Dorsolateral prefrontal cortex (tissue), 120 donors: ENCODE measurements at regions of chr2 and their contacts with region 1.

Region 1: GRCh38 chr2:16452117-16452516 is 213.5 kb downstream of the CYRIA start:
- DNase-seq: no peak
- H3K4me3 ChIP-seq: no peak overlapping the region
- H3K27ac ChIP-seq: no peak overlapping the region
- H3K27me3 ChIP-seq: peaks cover 0 to 3% (median 0%) of the 10 kb centered on the region in 45 donors
- CTCF ChIP-seq: no peak

Region 2: GRCh38 chr2:16346671-16347070 is 105.4 kb before region 1 on chr2:
- intact Hi-C with region 1: loop called in 1 of 2 experiments (anchors 5 kb)
- DNase-seq: no peak
- H3K4me3 ChIP-seq: no peak overlapping the region
- H3K27ac ChIP-seq: no peak overlapping the region
- H3K27me3 ChIP-seq: no peaks in the 10 kb centered on the region
- CTCF ChIP-seq: no peak

Region 3: DNA sequence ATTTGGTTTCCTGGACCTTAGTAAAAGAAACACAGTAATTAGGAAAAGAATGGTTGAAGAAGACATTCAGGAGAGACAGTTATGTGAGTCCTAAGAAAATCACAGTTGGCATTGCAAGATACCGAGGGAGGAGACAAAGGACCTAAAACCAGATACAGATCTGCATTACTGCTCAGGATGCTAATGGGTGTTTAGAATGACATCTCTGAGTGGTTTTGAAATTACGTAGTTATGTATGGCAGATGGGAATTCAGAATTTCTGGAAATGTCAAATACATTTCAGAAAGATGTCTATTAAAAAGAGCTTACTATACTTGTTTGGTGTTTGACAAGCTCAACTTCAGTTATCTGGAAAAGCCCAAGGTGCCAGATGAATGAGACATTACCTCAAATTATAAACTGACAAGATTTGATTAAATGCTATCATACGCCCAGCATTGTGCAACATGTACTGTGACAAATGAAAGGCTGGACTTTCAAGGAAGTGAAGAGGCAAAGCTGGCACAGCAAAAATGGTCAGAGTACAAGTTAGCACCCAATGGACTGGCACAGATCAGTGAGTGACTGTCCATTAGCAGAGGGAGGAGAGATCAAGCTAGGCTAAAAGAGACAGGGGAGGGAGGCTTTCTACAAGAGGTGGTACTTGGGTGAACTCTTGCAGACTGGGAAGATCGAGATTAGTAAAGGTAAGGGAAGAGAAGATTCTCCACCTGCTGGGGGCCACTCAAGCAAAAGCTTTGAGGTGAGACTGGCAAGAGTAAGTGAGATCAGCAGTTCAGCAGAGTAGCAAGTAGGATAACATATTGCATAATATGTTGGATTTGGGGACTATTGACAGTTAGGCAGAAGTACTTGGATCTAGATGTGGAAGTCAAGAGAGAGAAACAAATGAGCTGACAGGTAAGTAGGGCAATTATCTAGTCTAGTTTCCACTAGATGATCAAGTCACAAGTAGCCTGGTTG is 44.6 kb after region 1 on chr2:
- intact Hi-C with region 1: no loop called
- DNase-seq: no peak
- H3K4me3 ChIP-seq: no peak overlapping the region
- H3K27ac ChIP-seq: no peak overlapping the region
- H3K27me3 ChIP-seq: peaks cover 0 to 4% (median 0%) of the 10 kb centered on the region in 45 donors
- CTCF ChIP-seq: no peak